ENCODE measurements at regions of chr12 and their contacts with region 1.

Region 1: DNA sequence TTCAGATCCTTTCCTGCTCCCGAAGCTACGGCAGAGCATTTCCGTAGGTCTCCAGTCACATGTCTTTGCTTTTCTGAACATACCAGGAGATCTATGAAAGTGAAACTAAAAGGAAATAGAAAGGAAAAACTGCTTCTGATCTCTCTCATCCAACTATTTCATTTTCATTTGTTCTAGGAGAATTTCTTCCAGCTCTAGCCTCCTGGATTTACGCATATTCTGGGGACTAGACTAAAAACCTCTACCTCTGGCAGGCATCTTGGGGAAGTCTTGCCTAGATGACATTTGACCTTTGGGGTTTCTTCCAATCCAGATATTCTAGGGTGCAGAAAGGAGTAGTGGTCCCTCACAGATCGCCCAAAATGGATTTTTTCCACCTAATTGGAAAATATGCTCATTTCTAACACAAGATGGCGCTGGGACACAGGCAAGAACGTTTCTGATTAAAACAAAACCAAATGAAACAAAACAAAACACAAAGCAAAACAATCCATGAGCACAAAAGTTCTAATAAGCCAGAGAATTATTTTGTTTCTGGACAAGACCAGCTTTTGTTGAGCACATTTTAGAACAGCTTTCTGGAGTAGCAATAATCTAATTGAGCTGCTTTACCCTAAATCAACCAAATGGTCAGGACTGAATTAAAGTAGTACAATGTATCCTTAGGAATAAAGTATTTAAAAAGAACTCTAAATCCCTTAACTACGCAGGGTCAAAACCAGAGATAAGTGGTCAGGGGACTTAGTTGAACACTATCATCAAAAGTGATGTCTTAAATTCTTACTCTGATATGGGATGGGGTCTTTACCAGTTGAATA is 12.3 kb upstream of the PARP11 start:
- DNase-seq: no peak
- H3K4me3 ChIP-seq: peak overlapping the region in 6 of 8 donors; percentile 19 to 56 (median 28)
- H3K27ac ChIP-seq: peak overlapping the region; percentile 23 to 82 (median 63)
- H3K4me1 ChIP-seq: peaks cover 0 to 16% (median 10%) of the 10 kb centered on the region in 6 donors
- H3K27me3 ChIP-seq: peaks cover 0 to 9% (median 0%) of the 10 kb centered on the region in 7 donors
- CTCF ChIP-seq: peak; percentile 45 to 90 (median 74)
- POLR2A ChIP-seq: no peak

Region 2: GRCh38 chr12:3920351-3921150 is 35.1 kb after region 1 on chr12:
- intact Hi-C with region 1: no loop called
- DNase-seq: no peak
- H3K4me3 ChIP-seq: no peak overlapping the region
- H3K27ac ChIP-seq: no peak overlapping the region
- H3K4me1 ChIP-seq: no peaks in the 10 kb centered on the region
- H3K27me3 ChIP-seq: peaks cover 0 to 63% (median 7%) of the 10 kb centered on the region in 7 donors
- CTCF ChIP-seq: no peak
- POLR2A ChIP-seq: no peak

Region 3: GRCh38 chr12:4030929-4031702 is 145.6 kb after region 1 on chr12:
- intact Hi-C with region 1: loop called (anchors 10 kb)
- DNase-seq: peak; percentile 92
- H3K4me3 ChIP-seq: peak overlapping the region; percentile 40 to 75 (median 46)
- H3K27ac ChIP-seq: peak overlapping the region in 7 of 8 donors; percentile 55 to 80 (median 71)
- H3K4me1 ChIP-seq: peaks cover 5 to 34% (median 25%) of the 10 kb centered on the region in 6 donors
- H3K27me3 ChIP-seq: peaks cover 0 to 17% (median 0%) of the 10 kb centered on the region in 7 donors
- CTCF ChIP-seq: peak in 4 of 11 experiments; percentile 18 to 36 (median 23)
- POLR2A ChIP-seq: no peak